HEK293 (cell line): ENCODE measurements at regions of chr15 and their contacts with region 1.

Region 1: DNA sequence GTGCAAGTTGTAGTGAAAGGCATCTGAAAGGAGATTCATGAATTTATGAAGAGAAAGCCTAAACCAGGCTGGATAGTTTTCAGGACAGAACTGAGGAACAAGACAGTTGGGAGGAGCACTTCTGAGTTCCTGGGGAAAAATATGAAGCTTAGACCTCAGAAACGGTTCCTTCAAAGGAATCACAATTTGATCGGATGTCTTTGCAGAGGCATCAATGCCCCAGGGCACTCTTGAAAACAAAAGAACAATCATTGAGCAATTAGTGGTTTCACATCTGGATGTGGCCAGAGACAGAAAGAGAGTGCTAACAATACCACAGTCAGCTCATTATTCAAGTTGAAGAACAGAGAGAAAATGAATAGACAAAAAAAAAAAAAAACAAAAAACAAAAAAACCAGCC is 86.2 kb downstream of the KLF13 start:
- H3K4me3 ChIP-seq: no peak overlapping the region
- H3K27ac ChIP-seq: no peak overlapping the region
- H3K4me1 ChIP-seq: no peaks in the 10 kb centered on the region
- CTCF ChIP-seq: no peak

Region 2: DNA sequence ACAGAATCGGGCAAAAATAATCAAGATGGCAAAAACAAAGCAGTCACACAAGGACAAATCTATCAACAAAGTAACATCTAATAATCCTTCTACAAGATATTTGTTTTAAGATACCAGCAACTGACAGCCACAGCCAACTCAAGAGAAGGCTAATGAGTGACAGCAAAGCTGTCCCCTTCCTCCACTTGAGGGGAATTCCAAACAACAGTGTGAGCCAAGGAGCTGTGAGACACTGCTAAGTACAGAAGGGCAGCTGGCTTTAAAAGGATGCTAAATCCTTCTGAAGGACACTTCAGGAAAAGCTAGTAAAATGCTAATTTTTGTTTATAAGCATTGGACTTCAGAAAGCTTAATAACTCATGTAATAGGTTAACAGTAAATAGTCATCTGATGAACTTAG is 1450.4 kb before region 1 on chr15:
- CTCF ChIA-PET with region 1: no interaction called
- POLR2A ChIA-PET with region 1: interaction called, 10 read pairs
- H3K4me3 ChIP-seq: no peak overlapping the region
- H3K27ac ChIP-seq: no peak overlapping the region
- H3K4me1 ChIP-seq: no peaks in the 10 kb centered on the region
- CTCF ChIP-seq: no peak